Esophagus muscularis mucosa (tissue), 4 donors: ENCODE measurements at regions of chr6 and their contacts with region 1.

Region 1: DNA sequence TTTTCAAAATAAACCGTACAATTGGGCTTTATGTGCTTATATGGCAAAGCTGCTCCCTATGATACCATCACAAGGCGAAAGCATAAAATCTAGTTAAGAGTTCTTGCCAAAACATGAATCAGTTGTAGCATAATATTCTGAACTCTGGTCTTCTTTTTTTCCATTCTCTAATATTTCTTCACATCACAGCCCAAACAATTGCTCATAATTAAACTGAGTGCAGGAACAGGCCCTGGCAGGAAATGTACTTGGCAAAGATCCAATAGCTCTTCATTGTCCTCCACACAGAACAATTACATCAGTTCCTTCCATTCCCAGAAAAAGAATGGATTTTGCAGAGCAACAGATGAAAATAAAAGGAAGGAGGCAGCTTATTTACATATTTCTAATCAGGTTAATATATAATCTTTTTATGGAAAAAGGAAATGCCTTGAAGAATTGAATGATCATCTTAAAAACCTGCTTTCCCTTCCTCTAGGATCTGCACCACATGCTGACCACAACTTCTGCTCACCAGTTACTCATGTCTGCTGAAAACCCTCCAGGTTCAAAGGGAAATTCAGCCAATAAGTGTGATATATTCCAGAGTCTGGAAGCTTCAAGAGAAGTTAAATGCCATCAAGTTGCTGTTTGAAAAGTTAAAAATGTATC is 123.3 kb upstream of the COL21A1 start:
- DNase-seq: no peak
- H3K4me3 ChIP-seq: peak overlapping the region in 3 of 4 donors; percentile 17 to 41 (median 21)
- H3K27ac ChIP-seq: peak overlapping the region; percentile 90 to 94 (median 90)
- H3K4me1 ChIP-seq: peaks cover 58 to 96% (median 93%) of the 10 kb centered on the region in 4 donors
- H3K27me3 ChIP-seq: no peaks in the 10 kb centered on the region
- CTCF ChIP-seq: no peak
- EP300 ChIP-seq: no peak
- POLR2A ChIP-seq: no peak

Region 2: DNA sequence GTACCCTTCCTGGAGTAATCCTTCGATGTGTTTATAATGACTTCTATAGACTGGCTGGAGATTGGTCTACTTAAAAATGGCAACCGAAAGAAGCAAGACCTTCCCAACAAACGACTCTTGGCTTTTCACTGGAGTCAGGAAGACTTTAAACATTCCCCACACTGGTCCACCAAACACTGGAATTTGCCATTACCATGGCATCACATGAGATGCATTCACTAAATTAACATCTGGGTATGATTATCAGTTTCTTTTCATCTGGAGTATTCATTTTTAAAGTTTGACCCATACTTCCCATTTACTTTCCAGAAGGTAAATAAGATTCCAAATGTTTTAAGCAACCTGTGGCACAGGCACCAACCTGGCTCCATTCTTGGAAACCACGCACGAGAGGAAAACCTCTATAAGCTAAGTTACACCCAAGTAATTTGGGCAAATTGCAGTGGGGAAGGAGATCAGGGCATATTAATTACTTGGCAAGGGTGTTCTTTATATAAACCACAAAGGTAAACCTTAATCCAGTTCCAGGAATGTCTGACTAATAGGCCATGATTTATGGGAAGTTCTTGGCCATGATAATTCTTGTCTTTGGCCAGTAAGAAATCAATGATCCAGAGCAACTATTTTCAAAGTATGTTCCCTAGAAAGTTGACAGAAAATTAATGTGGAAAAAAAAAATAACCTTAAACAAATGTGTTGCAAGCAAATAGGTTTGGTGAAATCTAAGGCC is 66.7 kb after region 1 on chr6:
- intact Hi-C with region 1: loop called (anchors 5 kb)
- DNase-seq: no peak
- H3K4me3 ChIP-seq: no peak overlapping the region
- H3K27ac ChIP-seq: peak overlapping the region; percentile 20 to 64 (median 36)
- H3K4me1 ChIP-seq: peaks cover 0 to 34% (median 25%) of the 10 kb centered on the region in 4 donors
- H3K27me3 ChIP-seq: no peaks in the 10 kb centered on the region
- CTCF ChIP-seq: no peak
- EP300 ChIP-seq: no peak
- POLR2A ChIP-seq: no peak

Region 3: GRCh38 chr6:56484669-56485068 is 114.0 kb after region 1 on chr6:
- intact Hi-C with region 1: loop called (anchors 10 kb)
- DNase-seq: no peak
- H3K4me3 ChIP-seq: no peak overlapping the region
- H3K27ac ChIP-seq: peak overlapping the region; percentile 20 to 47 (median 40)
- H3K4me1 ChIP-seq: peaks cover 0 to 40% (median 21%) of the 10 kb centered on the region in 4 donors
- H3K27me3 ChIP-seq: no peaks in the 10 kb centered on the region
- CTCF ChIP-seq: no peak
- EP300 ChIP-seq: no peak
- POLR2A ChIP-seq: no peak

Region 4: DNA sequence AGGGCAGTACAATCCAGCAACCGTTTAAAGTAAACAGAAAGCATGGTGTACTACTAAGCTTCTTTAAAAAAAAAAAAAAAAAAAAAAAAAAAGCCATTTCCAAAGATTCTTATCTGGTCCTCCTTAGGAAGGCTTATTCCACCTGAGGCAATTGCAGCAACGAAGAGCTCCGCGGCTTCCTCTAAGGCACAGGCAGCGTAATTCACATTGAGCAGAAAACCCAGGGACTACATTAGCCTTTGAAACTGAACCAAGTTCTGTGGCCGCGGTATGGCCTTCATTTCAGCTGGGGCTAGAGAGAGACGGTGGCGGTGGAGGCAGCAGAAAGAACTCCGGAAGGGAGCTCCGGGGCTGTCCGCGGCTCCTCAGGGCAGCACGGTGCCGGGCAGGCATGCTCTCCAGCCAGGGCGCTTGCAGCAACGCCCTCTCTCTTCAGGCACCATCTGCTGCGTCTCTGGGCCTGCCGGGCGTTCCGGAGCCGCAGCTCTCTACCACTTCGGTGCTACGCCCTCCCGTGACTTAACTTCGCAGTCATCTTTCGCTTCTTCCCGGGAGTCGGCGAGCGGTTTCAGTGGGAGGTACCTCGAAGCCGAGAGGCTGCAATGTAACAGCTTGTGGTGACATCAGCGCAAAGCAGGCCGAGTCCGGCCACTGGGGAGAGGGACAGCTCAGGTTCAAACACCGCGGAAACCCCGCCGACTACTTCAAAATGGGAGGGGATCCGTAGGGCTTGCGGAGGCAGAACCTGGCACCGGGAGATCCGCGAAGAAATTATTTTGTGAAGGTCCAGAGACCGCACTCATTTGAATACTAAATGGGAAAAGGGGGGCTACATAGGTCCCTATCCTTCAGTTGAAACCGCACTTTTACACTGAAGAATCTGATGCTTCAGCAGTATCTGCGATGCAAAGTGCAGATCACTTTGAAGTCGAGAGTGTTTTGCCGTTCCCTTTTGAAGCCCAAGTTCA is 172.0 kb after region 1 on chr6:
- intact Hi-C with region 1: loop called (anchors 2 kb)
- DNase-seq: peak; percentile 98
- H3K4me3 ChIP-seq: peak overlapping the region; percentile 61 to 78 (median 68)
- H3K27ac ChIP-seq: peak overlapping the region; percentile 91 to 97 (median 92)
- H3K4me1 ChIP-seq: peaks cover 33 to 68% (median 52%) of the 10 kb centered on the region in 4 donors
- H3K27me3 ChIP-seq: no peaks in the 10 kb centered on the region
- CTCF ChIP-seq: peak; percentile 44 to 66 (median 54)
- EP300 ChIP-seq: no peak
- POLR2A ChIP-seq: peak; percentile 66

Region 5: GRCh38 chr6:56555438-56555872 is 184.8 kb after region 1 on chr6:
- intact Hi-C with region 1: loop called (anchors 2 kb)
- DNase-seq: no peak
- H3K4me3 ChIP-seq: no peak overlapping the region
- H3K27ac ChIP-seq: peak overlapping the region; percentile 42 to 60 (median 44)
- H3K4me1 ChIP-seq: peaks cover 19 to 41% (median 37%) of the 10 kb centered on the region in 4 donors
- H3K27me3 ChIP-seq: no peaks in the 10 kb centered on the region
- CTCF ChIP-seq: no peak
- EP300 ChIP-seq: no peak
- POLR2A ChIP-seq: no peak